Activated CD4-positive, alpha-beta T cell treated with anti-CD3 and anti-CD28 coated beads, Interleukin-2, amount 10 ng/mL, durations not matched to agents 7 days and 5 days (primary cell): ENCODE measurements at regions of chr19 and their contacts with region 1.

Region 1: GRCh38 chr19:16382775-16383543 is 58.3 kb downstream of the KLF2 start:
- DNase-seq: peak; percentile 85
- H3K4me3 Mint-ChIP-seq: peak overlapping the region; percentile 64
- H3K27ac Mint-ChIP-seq: peak overlapping the region; percentile 92
- H3K4me1 Mint-ChIP-seq: peaks cover 68% of the 10 kb centered on the region
- H3K27me3 Mint-ChIP-seq: no peaks in the 10 kb centered on the region

Region 2: GRCh38 chr19:16247353-16248182 is 135.4 kb before region 1 on chr19:
- CTCF ChIA-PET with region 1: interaction called, 29 read pairs
- POLR2A ChIA-PET with region 1: interaction called, 6 read pairs
- DNase-seq: peak; percentile 87
- H3K4me3 Mint-ChIP-seq: no peak overlapping the region
- H3K27ac Mint-ChIP-seq: peak overlapping the region; percentile 3
- H3K4me1 Mint-ChIP-seq: peaks cover 36% of the 10 kb centered on the region
- H3K27me3 Mint-ChIP-seq: peaks cover 8% of the 10 kb centered on the region

Region 3: DNA sequence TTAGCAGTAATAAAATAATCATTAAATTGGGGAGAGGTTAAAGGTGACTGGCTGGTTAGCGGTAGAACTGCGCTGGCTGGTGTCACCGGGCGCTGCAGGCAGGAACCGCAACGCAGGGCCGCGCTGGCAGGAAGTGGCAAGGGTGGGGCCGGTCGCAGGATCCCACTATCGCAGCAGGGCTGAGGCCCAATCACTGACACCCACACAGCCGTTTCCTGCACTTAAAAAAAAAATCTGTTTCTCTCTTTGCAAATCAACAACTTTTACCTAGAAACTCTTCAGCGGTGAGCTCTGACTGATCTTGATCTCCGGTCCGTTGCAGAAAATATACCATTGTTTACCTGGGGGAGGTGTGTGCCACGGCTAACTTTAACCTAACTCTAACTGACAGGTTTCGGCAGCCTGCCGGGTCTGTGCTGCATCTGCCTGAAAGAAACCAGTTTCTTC is 11.4 kb before region 1 on chr19:
- CTCF ChIA-PET with region 1: interaction called, 31 read pairs
- POLR2A ChIA-PET with region 1: interaction called, 6 read pairs
- DNase-seq: peak; percentile 94
- H3K4me3 Mint-ChIP-seq: no peak overlapping the region
- H3K27ac Mint-ChIP-seq: no peak overlapping the region
- H3K4me1 Mint-ChIP-seq: peaks cover 45% of the 10 kb centered on the region
- H3K27me3 Mint-ChIP-seq: no peaks in the 10 kb centered on the region